HEK293T (cell line): ENCODE measurements at regions of chr13 and their contacts with region 1.

Region 1: DNA sequence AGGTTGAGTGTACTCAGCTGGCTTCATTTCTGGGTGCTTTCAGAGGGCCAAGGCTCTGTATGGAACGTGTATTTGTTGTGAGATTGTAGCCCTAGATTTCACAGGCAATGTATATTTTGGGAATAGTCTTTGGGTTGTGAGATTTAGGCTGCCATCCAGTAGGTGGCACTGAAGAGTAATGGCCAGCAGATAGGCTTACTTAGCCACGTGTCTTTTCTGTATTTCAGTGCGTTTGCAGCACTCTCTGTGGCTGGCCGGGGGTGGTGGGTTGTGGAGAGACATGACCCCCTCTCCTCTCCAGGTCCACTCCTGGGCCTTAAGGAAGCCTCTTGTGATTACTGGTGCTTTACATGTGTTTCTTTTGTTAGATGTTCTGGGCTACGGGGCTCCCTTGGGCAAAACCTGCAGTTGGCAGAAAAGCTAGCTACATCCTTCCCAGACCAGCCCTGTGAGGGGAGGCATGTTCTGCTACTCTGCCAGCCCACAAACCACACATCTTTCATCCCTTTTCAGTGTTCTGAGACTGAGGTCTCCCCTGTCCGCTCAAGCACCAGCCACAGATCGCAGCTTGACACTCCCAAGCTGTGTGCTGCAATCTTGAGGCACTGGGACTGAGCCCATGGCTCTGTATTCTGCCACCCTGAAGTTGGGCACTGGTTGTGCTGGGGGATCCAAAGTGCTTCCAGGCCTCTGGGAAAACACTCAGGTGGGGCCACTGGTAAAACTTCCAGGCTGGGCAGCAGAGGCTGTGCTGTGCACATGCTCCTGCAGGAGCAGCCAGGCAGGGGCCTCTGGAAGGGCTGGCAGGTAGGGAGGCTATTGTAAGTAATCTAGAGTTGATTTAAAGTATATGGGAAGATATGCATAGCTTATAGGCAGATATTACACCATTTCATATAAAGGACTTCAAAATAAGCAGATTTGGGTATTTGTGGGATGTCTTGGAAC is 1096.8 kb upstream of the PCDH20 start:
- DNase-seq: peak; percentile 85

Region 2: GRCh38 chr13:62524061-62524460 is 11.6 kb after region 1 on chr13:
- CTCF ChIA-PET with region 1: interaction called, 11 read pairs
- POLR2A ChIA-PET with region 1: no interaction called
- DNase-seq: no peak